ENCODE measurements at regions of chrX and their contacts with region 1.

Region 1: GRCh38 chrX:150982788-150983520 is at the start of gene HMGB3:
- DNase-seq: peak; percentile 69
- ATAC-seq: peak; percentile 98
- H3K4me3 ChIP-seq: peak within 1 kb of the TSS; percentile 78 to 89
- H3K27ac ChIP-seq: peak within 1 kb of the TSS; percentile 90
- H3K4me1 ChIP-seq: peaks cover 17% of the 10 kb centered on the region
- H3K27me3 ChIP-seq: no peaks in the 10 kb centered on the region
- CTCF ChIP-seq: no peak
- total RNA-seq, gene HMGB3: 251 TPM

Region 2: GRCh38 chrX:150898343-150899190 is 84.4 kb before region 1 on chrX and contains the start of gene CD99L2:
- CTCF ChIA-PET with region 1: no interaction called
- POLR2A ChIA-PET with region 1: no interaction called
- in situ Hi-C with region 1: no loop called
- intact Hi-C with region 1: loop called (anchors 5 kb)
- DNase-seq: peak; percentile 48
- ATAC-seq: peak; percentile 95
- H3K4me3 ChIP-seq: peak within 1 kb of the TSS; percentile 80 to 86
- H3K27ac ChIP-seq: peak within 1 kb of the TSS; percentile 83
- H3K4me1 ChIP-seq: peaks cover 12% of the 10 kb centered on the region
- H3K27me3 ChIP-seq: no peaks in the 10 kb centered on the region
- CTCF ChIP-seq: no peak
- total RNA-seq, gene CD99L2: 156 TPM

Measured in Panc1 (cell line).